Head of caudate nucleus (tissue), 42 donors: ENCODE measurements at regions of chr22 and their contacts with region 1.

Region 1: GRCh38 chr22:46845296-46846149 is 83.1 kb downstream of the TBC1D22A start:
- DNase-seq: peak in 22 of 42 donors; percentile 27 to 64 (median 44)

Region 2: DNA sequence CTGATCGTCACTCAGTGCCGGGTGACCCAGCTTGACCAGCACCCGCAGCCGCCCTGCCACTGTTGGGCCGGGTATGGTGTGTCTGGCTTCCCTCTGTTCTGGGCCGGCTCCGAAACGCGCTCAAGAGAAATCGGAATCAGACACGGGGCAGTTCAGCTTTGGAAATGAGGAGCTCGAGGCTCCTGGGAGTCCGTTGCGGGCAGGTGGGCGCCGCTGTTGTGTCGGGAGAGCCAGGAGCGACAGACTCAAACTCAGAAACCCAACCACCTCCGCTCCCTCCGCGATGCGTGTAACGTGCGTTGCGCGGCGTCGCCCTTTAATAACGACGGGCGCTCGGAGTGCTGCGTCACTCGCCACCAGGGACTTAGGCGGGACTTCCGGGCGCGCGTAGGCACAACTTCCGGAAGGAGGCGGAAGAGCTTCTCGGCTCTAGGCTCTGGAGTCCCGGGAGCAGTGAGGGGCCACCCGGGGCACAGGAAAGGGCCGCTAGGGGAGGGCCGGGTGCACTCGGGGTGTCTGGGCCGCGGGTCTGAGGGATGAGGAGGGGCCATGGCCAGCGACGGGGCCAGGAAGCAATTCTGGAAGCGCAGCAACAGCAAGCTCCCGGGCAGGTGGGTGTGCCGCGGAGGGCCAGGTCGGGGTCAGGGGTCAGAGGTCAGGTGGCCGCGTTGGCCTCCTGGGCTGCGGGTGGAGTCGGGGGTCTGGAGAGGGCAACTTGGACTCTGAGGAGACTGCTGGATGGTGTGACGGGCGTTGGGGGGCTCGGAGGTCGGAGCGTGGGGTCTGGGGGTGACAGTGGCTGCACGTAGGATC is 83.1 kb before region 1 on chr22 and contains the start of gene TBC1D22A:
- intact Hi-C with region 1: loop called (anchors 5 kb)
- DNase-seq: peak; percentile 92 to 98 (median 96)

Region 3: DNA sequence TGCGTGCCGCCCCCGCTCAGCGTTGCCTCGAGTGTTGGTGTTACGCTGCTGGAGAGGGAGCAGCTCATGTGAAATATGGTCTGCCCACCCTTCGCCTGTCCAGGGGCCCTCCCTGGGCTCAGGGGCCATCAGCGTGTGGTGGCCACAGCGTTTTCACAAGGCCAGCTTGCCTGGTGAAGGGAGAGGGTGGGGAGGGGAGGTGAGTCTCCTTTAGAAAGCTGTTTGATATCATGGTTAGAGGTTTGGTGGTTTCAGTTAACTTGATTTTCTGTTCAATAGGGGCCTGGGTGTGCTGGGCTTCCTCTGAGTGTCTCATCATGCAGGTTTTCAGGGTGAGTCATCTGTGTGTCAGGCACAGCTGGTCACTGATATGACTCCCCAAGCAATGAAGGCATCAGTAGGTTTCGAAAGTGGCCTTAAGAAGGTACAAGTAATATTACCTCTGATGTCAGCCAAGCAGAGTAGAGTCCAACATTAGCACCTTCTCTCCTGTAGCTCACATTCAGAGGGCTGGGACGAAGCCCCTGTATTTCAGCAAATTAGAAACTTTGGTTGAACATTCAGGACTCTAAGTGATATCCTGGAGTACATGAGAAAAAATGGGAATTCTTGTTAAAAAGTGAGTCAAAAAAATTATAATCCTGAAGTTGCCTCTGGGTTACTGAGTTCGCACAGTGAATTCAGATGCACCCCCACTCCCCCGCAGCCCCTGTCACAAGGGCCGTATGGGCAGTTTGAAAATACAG is 89.4 kb after region 1 on chr22:
- intact Hi-C with region 1: no loop called
- DNase-seq: peak in 1 of 42 donors; percentile 25

Region 4: GRCh38 chr22:48492366-48493320 is 1647.1 kb after region 1 on chr22:
- intact Hi-C with region 1: loop called (anchors 10 kb)
- DNase-seq: peak; percentile 63 to 92 (median 81)